H1 (cell line): ENCODE measurements at regions of chr1 and their contacts with region 1.

Region 1: GRCh38 chr1:41416552-41417334 is 55.5 kb downstream of the FOXO6 start:
- DNase-seq: peak; percentile 58 to 87
- H3K4me3 ChIP-seq: no peak overlapping the region
- H3K27ac ChIP-seq: no peak overlapping the region
- H3K4me1 ChIP-seq: peaks cover 0 to 7% (median 1%) of the 10 kb centered on the region in 4 experiments; a peak in 2 of 7 replicates
- H3K27me3 ChIP-seq: no peaks in the 10 kb centered on the region
- CTCF ChIP-seq: peak; percentile 97 to 99 (median 98)
- EP300 ChIP-seq: no peak; a peak in 1 of 3 replicates
- POLR2A ChIP-seq: no peak
- RAD21 ChIP-seq: peak; percentile 98 to 99

Region 2: GRCh38 chr1:41313661-41314131 is 103.0 kb before region 1 on chr1:
- CTCF ChIA-PET with region 1: interaction called, 336 read pairs
- POLR2A ChIA-PET with region 1: interaction called, 3 read pairs
- DNase-seq: peak; percentile 29 to 70
- H3K4me3 ChIP-seq: no peak overlapping the region
- H3K27ac ChIP-seq: no peak overlapping the region
- H3K4me1 ChIP-seq: peaks cover 0 to 14% (median 2%) of the 10 kb centered on the region in 4 experiments; a peak in 4 of 7 replicates
- H3K27me3 ChIP-seq: peaks cover 0 to 2% (median 0%) of the 10 kb centered on the region in 4 experiments; a peak in 1 of 7 replicates
- CTCF ChIP-seq: peak; percentile 64 to 87 (median 81)
- EP300 ChIP-seq: no peak
- POLR2A ChIP-seq: no peak
- RAD21 ChIP-seq: peak; percentile 55 to 73

Region 3: GRCh38 chr1:41333146-41333784 is 83.5 kb before region 1 on chr1:
- CTCF ChIA-PET with region 1: interaction called, 336 read pairs
- POLR2A ChIA-PET with region 1: interaction called, 3 read pairs
- DNase-seq: peak in 1 of 2 experiments; percentile 23
- H3K4me3 ChIP-seq: no peak overlapping the region
- H3K27ac ChIP-seq: no peak overlapping the region
- H3K4me1 ChIP-seq: peaks cover 0 to 4% (median 4%) of the 10 kb centered on the region in 4 experiments; a peak in 5 of 7 replicates
- H3K27me3 ChIP-seq: no peaks in the 10 kb centered on the region
- CTCF ChIP-seq: no peak
- EP300 ChIP-seq: no peak
- POLR2A ChIP-seq: no peak
- RAD21 ChIP-seq: no peak

Region 4: GRCh38 chr1:41360993-41361753 is 55.6 kb before region 1 on chr1 and contains the start of gene FOXO6:
- CTCF ChIA-PET with region 1: interaction called, 162 read pairs
- POLR2A ChIA-PET with region 1: interaction called, 3 read pairs
- DNase-seq: peak; percentile 95 to 99
- H3K4me3 ChIP-seq: peak within 1 kb of the TSS; percentile 40 to 67 (median 47)
- H3K27ac ChIP-seq: no peak within 1 kb of the TSS
- H3K4me1 ChIP-seq: peaks cover 3 to 58% (median 42%) of the 10 kb centered on the region in 4 experiments
- H3K27me3 ChIP-seq: peaks cover 21 to 38% (median 36%) of the 10 kb centered on the region in 4 experiments
- CTCF ChIP-seq: peak; percentile 73 to 85 (median 76)
- EP300 ChIP-seq: no peak
- POLR2A ChIP-seq: no peak
- RAD21 ChIP-seq: peak; percentile 68 to 84
- total RNA-seq, gene FOXO6: 3.0 and 3.8 TPM in 2 replicates

Region 5: GRCh38 chr1:41387667-41388091 is 29.1 kb before region 1 on chr1:
- CTCF ChIA-PET with region 1: interaction called, 247 read pairs
- POLR2A ChIA-PET with region 1: interaction called, 8 read pairs
- DNase-seq: peak in 1 of 2 experiments; percentile 77
- H3K4me3 ChIP-seq: peak overlapping the region in 1 of 4 experiments; percentile 21; a peak in 1 of 8 replicates
- H3K27ac ChIP-seq: no peak overlapping the region
- H3K4me1 ChIP-seq: peaks cover 6 to 25% (median 15%) of the 10 kb centered on the region in 4 experiments
- H3K27me3 ChIP-seq: peaks cover 3 to 30% (median 21%) of the 10 kb centered on the region in 4 experiments
- CTCF ChIP-seq: no peak
- EP300 ChIP-seq: peak in 1 of 2 experiments; percentile 18; a peak in 1 of 3 replicates
- POLR2A ChIP-seq: no peak
- RAD21 ChIP-seq: peak in 1 of 2 experiments; percentile 22; a peak in 1 of 4 replicates

Region 6: GRCh38 chr1:41444246-41444645 is 27.5 kb after region 1 on chr1:
- CTCF ChIA-PET with region 1: interaction called, 10 read pairs
- POLR2A ChIA-PET with region 1: no interaction called
- DNase-seq: no peak
- H3K4me3 ChIP-seq: no peak overlapping the region
- H3K27ac ChIP-seq: no peak overlapping the region
- H3K4me1 ChIP-seq: no peaks in the 10 kb centered on the region; a peak in 2 of 7 replicates
- H3K27me3 ChIP-seq: no peaks in the 10 kb centered on the region
- CTCF ChIP-seq: peak; percentile 26 to 63 (median 48)
- EP300 ChIP-seq: no peak
- POLR2A ChIP-seq: no peak
- RAD21 ChIP-seq: peak in 1 of 2 experiments; percentile 44; a peak in 2 of 4 replicates